ENCODE measurements at regions of chr11 and their contacts with region 1.

Region 1: DNA sequence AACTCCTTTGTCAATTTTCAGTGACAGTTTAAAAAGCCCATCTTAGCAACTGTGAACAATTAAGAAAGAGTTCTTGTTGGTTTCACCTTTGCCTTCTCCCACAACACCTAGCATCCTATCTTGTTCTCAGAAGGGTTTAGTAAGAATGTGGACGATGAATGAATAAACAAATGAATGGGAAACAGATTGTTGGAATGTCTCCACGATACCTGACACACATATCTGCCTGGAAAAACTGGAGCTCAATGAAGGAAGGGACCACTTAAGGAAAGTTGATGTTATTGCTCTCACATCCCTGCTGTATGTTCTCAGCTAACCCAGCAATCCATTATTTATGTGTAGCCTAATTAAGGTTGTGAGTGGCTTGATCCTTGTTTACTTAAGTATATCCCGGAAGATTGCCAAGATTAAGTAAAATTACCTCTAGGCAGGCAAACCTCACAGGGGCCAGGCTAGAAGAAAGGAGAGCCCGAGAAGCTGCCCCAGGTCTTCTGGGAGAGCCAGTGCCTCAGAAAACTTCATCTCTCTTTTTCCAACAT is 286.4 kb downstream of the NXPE2 start:
- DNase-seq: no peak
- H3K4me3 ChIP-seq: no peak overlapping the region
- H3K27ac ChIP-seq: no peak overlapping the region
- H3K4me1 ChIP-seq: no peaks in the 10 kb centered on the region
- H3K27me3 ChIP-seq: no peaks in the 10 kb centered on the region
- CTCF ChIP-seq: no peak

Region 2: DNA sequence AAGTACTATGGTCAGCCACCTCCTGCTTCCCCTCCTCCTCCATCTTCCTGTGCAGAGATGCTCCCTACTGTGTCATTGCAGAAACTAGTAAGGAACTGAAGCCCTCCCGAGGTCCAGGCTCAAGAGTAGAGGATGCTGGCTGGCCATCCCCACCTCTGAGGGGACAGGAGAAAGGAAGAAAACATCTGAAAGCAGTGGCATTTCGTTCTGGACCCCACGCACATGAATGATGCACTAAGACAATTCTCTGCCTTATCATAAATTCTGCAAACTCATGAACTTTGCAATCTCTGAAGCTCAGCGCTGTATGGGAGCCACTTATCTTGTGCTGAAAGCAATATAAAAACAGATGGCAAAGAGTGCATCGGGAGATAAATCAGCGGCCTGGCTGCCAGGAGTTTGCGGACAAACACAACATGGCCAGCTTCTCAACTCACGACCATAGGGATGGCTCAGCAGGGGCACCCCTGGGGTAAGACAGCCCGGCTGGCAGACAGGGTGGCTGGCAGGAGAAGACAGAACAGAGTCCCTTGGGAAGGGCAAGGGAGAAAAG is 19.9 kb after region 1 on chr11:
- CTCF ChIA-PET with region 1: no interaction called
- dilution Hi-C with region 1: no loop called
- in situ Hi-C with region 1: no loop called
- intact Hi-C with region 1: loop called (anchors 1 kb)
- DNase-seq: no peak
- H3K4me3 ChIP-seq: no peak overlapping the region
- H3K27ac ChIP-seq: no peak overlapping the region
- H3K4me1 ChIP-seq: peaks cover 6% of the 10 kb centered on the region
- H3K27me3 ChIP-seq: no peaks in the 10 kb centered on the region
- CTCF ChIP-seq: no peak

Region 3: DNA sequence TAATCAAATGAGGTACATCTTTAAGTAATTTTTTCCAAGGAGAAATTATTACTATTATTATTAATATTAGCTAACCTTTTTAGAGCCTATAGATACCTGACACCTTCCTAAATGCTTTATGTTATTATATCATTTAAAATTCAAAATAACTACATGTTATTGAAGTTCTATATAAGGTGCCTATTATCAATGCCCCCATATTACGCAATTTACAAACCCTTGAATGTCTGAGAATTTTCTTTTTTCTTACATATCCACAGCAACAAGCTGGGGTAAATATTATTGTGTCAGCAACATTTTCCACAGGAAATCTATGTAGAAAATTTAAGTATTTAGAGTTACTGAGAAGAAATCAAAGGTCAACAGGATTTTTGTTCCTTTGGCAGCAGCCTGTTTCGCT is 40.9 kb after region 1 on chr11:
- CTCF ChIA-PET with region 1: no interaction called
- dilution Hi-C with region 1: no loop called
- in situ Hi-C with region 1: no loop called
- intact Hi-C with region 1: no loop called
- DNase-seq: no peak
- H3K4me3 ChIP-seq: no peak overlapping the region
- H3K27ac ChIP-seq: no peak overlapping the region
- H3K4me1 ChIP-seq: no peaks in the 10 kb centered on the region
- H3K27me3 ChIP-seq: no peaks in the 10 kb centered on the region
- CTCF ChIP-seq: no peak